A673 (cell line): ENCODE measurements at regions of chr11 and their contacts with region 1.

Region 1: DNA sequence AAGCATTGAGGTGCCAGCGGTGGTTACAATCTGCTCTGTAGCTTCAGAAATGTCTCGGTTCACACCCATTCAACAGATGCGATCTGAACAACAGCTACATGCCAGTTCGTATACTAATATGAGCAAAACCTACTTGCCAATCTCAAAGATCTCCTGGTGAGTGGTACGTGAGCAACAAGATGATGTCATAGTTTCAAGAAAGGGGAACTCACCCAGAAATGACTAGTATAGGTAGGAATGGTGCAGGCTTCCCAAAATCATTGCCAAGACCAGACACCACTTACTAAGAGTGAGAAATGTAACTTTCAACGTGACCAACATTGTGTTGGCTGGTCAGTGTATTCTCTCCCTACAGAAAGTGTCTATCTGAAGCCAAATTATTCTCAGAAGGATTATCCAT is 31.1 kb downstream of the OR6Q1 start:
- DNase-seq: no peak
- H3K4me3 ChIP-seq: no peak overlapping the region
- H3K27ac ChIP-seq: no peak overlapping the region
- H3K4me1 ChIP-seq: no peaks in the 10 kb centered on the region
- H3K27me3 ChIP-seq: peaks cover 3% of the 10 kb centered on the region
- CTCF ChIP-seq: no peak

Region 2: DNA sequence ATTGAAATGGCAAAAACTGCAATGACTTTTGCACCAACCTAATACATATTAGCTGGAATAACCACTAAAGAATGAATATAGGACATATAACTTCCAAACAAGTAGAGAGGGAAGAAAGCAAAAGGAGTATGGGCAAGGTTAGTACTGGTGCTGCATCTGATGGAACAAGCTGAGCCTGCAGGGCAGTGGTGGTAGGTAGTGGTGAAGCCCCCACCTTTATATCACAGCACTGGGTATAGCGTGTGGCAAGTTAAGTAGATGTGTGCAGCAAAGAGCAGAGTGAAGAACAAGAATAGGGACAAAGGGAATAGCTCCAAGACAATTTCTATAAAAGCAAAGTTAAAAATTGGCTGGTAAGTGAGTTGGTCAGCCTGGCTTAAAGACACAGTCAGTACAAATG is 238.0 kb before region 1 on chr11:
- CTCF ChIA-PET with region 1: no interaction called
- POLR2A ChIA-PET with region 1: no interaction called
- intact Hi-C with region 1: loop called (anchors 10 kb)
- DNase-seq: no peak
- H3K4me3 ChIP-seq: no peak overlapping the region
- H3K27ac ChIP-seq: no peak overlapping the region
- H3K4me1 ChIP-seq: no peaks in the 10 kb centered on the region
- H3K27me3 ChIP-seq: no peaks in the 10 kb centered on the region
- CTCF ChIP-seq: no peak